Activated naive CD8-positive, alpha-beta T cell treated with anti-CD3 and anti-CD28 coated beads, Interleukin-2, amount 10 ng/mL, durations not matched to agents 7 days and 5 days (primary cell): ENCODE measurements at regions of chr19 and their contacts with region 1.

Region 1: GRCh38 chr19:18557474-18558201 is at the start of gene KXD1:
- DNase-seq: peak; percentile 95
- ATAC-seq: peak; percentile 99
- H3K4me3 Mint-ChIP-seq: peak within 1 kb of the TSS; percentile 93
- H3K27ac Mint-ChIP-seq: peak within 1 kb of the TSS; percentile 89
- H3K4me1 Mint-ChIP-seq: peaks cover 20% of the 10 kb centered on the region
- H3K27me3 Mint-ChIP-seq: no peaks in the 10 kb centered on the region
- total RNA-seq, gene KXD1: 96.7 to 105 TPM

Region 2: DNA sequence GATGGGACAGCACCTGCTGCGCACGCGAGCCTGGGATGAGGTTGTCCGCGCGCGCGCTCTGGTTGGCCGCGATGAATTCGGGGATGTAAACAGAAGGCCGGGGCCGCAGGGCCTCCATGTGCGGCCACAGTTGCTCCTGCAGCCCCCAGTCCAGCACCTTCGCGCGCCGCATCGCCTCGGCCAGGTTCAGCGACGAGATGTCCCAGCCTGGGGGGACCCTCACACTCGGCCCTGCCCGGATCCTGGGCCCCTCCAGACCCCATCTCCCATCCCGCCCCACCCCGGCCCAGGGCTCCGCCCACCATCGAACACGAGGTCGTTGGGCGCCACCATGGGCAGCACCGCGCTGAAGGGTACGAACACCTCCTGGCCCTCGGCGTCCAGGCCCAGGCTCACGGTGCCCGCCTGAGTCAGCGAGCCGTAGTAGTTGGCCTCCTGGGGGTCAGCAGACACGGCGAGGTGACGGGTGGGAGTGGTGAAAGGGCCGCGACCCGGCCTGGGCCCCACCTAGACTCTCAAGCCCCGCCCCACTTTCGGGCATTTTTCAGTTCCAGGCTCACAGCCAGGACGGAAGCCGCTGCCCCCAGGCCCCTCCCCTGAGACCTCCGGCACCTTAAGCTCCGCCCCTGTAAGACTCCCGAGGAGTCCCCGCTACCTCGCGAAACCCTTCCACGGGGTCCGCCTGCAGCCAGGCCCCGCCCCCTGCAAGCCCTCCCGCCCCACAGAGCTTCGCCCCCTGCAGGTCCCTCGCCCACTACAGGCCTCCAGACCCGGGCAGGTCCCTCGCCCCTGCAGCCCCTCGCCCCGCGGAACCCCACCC is 120.8 kb before region 1 on chr19:
- POLR2A ChIA-PET with region 1: no interaction called
- DNase-seq: peak; percentile 83
- ATAC-seq: peak; percentile 71
- H3K4me3 Mint-ChIP-seq: peak overlapping the region; percentile 73
- H3K27ac Mint-ChIP-seq: peak overlapping the region; percentile 16
- H3K4me1 Mint-ChIP-seq: peaks cover 10% of the 10 kb centered on the region
- H3K27me3 Mint-ChIP-seq: no peaks in the 10 kb centered on the region

Region 3: GRCh38 chr19:18542936-18543815 is 14.5 kb before region 1 on chr19 and contains the start of gene FKBP8:
- POLR2A ChIA-PET with region 1: interaction called, 64 read pairs
- DNase-seq: peak; percentile 96
- ATAC-seq: peak; percentile 92
- H3K4me3 Mint-ChIP-seq: peak within 1 kb of the TSS; percentile 95
- H3K27ac Mint-ChIP-seq: peak within 1 kb of the TSS; percentile 99
- H3K4me1 Mint-ChIP-seq: peaks cover 10% of the 10 kb centered on the region
- H3K27me3 Mint-ChIP-seq: no peaks in the 10 kb centered on the region
- total RNA-seq, gene FKBP8: 261 to 275 TPM

Region 4: DNA sequence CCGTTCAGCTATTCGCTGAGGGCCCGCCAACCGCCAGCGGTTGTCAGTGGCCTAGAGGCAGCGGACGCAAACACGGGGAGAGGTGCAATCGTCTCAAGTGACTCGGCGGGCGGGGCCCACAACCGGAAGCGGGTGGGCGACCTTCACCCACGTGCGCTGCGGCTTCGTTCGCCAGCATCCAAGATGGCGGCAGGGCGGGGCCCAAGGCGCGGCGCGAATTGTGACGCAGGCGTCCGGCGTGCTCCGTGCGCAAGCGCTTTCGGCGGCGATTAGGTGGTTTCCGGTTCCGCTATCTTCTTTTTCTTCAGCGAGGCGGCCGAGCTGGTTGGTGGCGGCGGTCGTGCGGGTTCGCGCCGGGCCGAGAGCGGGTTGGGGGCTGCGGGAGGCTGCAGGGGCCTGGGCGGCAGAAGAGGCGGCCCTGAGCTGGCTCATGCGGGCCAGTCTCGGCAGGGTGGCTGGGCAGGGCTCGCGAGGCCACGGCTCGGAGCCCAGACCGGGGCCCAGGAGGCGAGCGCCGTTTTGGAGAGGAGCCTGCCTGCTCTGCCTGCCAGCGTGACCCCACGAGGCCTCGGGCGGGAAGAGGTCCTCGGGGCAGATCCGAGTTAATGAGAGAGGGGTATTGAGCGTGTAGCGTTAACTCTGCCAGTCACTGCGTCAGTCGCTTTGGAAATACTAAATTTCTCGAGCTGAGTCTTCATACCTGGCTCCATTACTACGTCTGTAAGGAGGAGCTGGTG is 14.1 kb after region 1 on chr19 and contains the start of gene UBA52:
- POLR2A ChIA-PET with region 1: interaction called, 75 read pairs
- DNase-seq: peak; percentile 100
- ATAC-seq: peak; percentile 93
- H3K4me3 Mint-ChIP-seq: peak within 1 kb of the TSS; percentile 97
- H3K27ac Mint-ChIP-seq: peak within 1 kb of the TSS; percentile 92
- H3K4me1 Mint-ChIP-seq: peaks cover 16% of the 10 kb centered on the region
- H3K27me3 Mint-ChIP-seq: no peaks in the 10 kb centered on the region
- total RNA-seq, gene UBA52: 1,538 to 1,547 TPM

Region 5: GRCh38 chr19:18596752-18597157 is 39.1 kb after region 1 on chr19:
- POLR2A ChIA-PET with region 1: no interaction called
- DNase-seq: no peak
- ATAC-seq: no peak
- H3K4me3 Mint-ChIP-seq: peak overlapping the region; percentile 22
- H3K27ac Mint-ChIP-seq: no peak overlapping the region
- H3K4me1 Mint-ChIP-seq: peaks cover 6% of the 10 kb centered on the region
- H3K27me3 Mint-ChIP-seq: peaks cover 17% of the 10 kb centered on the region